ENCODE measurements at regions of chr14 and their contacts with region 1.

Region 1: DNA sequence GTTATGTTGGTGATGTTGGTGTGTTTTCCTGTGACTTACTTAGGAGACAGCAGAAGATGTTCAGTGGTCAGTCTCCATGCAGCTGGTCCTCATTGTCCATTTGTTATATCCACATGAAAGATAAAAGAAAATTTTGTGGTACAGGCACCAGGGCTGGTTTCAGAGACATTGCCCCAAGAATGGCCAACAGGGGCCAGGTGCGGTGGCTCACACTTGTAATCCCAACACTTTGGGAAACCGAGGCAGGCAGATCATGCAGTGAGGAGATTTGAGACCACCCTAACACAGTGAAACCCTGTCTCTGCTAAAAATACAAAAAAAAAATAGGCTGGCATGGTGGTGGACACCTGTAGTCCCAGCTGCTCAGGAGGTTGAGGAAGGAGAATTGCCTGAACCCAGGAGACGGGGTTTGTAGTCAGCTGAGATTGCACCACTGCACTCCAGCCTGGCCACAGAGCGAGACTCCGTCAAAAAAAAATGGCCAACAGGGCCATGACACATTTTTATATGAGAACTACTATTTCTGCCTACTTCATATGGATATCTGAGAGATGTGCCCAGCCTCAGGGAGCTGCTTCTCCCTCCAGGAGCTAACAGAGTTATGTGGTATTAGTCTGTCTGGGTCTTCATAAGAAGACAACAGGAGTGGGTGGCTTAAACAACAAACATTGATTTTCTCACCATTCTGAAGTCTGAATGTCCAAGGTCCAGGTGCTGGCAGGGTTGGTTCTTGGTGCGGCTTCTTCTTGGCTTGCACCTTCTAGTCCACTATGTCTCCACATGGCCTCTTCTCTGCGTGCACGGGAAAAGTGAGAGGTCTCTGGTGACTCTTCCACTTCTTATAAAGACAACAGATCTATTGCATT is 821.7 kb downstream of the TMEM121 start:
- DNase-seq: no peak
- ATAC-seq: no peak
- H3K4me3 Mint-ChIP-seq: peak overlapping the region; percentile 37
- H3K27ac Mint-ChIP-seq: peak overlapping the region; percentile 27
- H3K4me1 Mint-ChIP-seq: peaks cover 35% of the 10 kb centered on the region
- H3K27me3 Mint-ChIP-seq: no peaks in the 10 kb centered on the region
- CTCF ChIP-seq: no peak

Region 2: DNA sequence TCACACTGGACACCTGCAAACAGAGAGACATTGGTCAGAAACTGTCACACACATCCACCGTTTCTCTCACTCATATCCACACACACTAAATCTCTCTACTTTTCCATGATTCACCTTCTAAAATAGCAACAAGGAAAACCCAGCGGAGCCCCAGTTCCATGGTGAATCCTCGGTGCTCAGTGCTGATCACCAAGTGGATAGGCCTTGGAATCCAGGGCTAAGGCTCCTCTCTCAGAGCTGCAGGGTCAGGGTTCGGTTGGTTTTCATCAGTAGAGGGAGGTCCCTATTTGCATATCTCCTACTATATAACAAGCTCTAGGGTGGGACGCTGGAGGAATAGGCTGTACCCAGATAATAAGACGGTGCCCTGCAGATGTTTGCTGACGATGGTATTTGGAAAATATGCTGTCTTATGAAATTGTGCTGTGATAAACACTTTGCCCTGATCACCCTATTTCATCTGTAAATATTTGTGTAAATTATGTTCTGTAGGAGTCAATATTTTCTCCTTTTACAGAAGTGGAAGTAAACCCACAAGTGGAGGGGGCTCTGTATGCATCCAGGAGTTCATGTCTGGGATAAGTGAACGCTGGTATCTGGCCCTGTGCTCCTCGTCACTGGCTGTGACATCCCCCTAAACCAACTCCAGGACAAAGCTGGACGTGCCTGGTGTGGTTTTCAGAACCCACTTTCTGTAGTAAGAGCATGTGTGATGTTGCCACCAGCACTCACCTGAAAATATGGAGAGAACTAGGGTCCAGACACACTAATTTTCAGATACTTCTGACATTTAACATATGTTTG is 112.6 kb before region 1 on chr14:
- CTCF ChIA-PET with region 1: no interaction called
- POLR2A ChIA-PET with region 1: no interaction called
- intact Hi-C with region 1: no loop called
- DNase-seq: no peak
- ATAC-seq: no peak
- H3K4me3 Mint-ChIP-seq: peak overlapping the region; percentile 77
- H3K27ac Mint-ChIP-seq: peak overlapping the region; percentile 70
- H3K4me1 Mint-ChIP-seq: peaks cover 7% of the 10 kb centered on the region
- H3K27me3 Mint-ChIP-seq: peaks cover 9% of the 10 kb centered on the region
- CTCF ChIP-seq: no peak

Region 3: DNA sequence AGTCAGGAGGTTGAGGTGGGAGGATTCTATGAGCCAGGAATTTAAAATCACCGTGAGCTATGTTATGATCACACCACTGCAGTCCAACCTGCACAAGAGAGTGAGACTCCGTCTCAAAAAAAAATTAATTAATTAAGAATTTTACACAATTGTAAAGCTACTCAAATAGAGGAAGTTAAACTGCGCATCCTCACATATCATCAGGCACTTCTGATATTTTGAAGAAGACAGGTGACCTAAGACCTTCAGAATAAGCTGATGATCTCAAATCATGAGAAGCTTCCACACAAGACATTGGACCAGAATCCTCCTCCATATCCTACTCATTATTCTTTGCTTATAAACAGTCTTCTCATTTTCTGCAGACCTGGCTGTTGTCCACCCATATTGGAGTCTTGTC is 20.9 kb before region 1 on chr14:
- CTCF ChIA-PET with region 1: no interaction called
- POLR2A ChIA-PET with region 1: interaction called, 3 read pairs
- intact Hi-C with region 1: loop called (anchors 1 kb)
- DNase-seq: no peak
- ATAC-seq: no peak
- H3K4me3 Mint-ChIP-seq: no peak overlapping the region
- H3K27ac Mint-ChIP-seq: no peak overlapping the region
- H3K4me1 Mint-ChIP-seq: peaks cover 3% of the 10 kb centered on the region
- H3K27me3 Mint-ChIP-seq: peaks cover 8% of the 10 kb centered on the region
- CTCF ChIP-seq: no peak